CD4-positive, alpha-beta memory T cell (primary cell): ENCODE measurements at regions of chr3 and their contacts with region 1.

Region 1: GRCh38 chr3:48507351-48508061 is 3.5 kb upstream of the SHISA5 start:
- DNase-seq: peak; percentile 75 to 84 (median 77)
- H3K4me3 ChIP-seq: no peak overlapping the region
- H3K4me3 Mint-ChIP-seq: peak overlapping the region in 7 of 8 donors; percentile 42 to 77 (median 64)
- H3K27ac ChIP-seq: peak overlapping the region; percentile 27
- H3K27ac Mint-ChIP-seq: peak overlapping the region; percentile 83 to 92 (median 86)
- H3K4me1 ChIP-seq: peaks cover 62% of the 10 kb centered on the region
- H3K4me1 Mint-ChIP-seq: peaks cover 36 to 62% (median 50%) of the 10 kb centered on the region in 4 donors
- H3K27me3 ChIP-seq: no peaks in the 10 kb centered on the region
- H3K27me3 Mint-ChIP-seq: no peaks in the 10 kb centered on the region

Region 2: GRCh38 chr3:47791193-47791855 is 716.2 kb before region 1 on chr3:
- CTCF ChIA-PET with region 1: no interaction called
- POLR2A ChIA-PET with region 1: no interaction called
- intact Hi-C with region 1: no loop called
- DNase-seq: no peak
- H3K4me3 ChIP-seq: no peak overlapping the region
- H3K4me3 Mint-ChIP-seq: peak overlapping the region in 1 of 8 donors; percentile 46
- H3K27ac ChIP-seq: no peak overlapping the region
- H3K27ac Mint-ChIP-seq: no peak overlapping the region
- H3K4me1 ChIP-seq: no peaks in the 10 kb centered on the region
- H3K4me1 Mint-ChIP-seq: peaks cover 0 to 1% (median 0%) of the 10 kb centered on the region in 4 donors
- H3K27me3 ChIP-seq: no peaks in the 10 kb centered on the region
- H3K27me3 Mint-ChIP-seq: no peaks in the 10 kb centered on the region

Region 3: DNA sequence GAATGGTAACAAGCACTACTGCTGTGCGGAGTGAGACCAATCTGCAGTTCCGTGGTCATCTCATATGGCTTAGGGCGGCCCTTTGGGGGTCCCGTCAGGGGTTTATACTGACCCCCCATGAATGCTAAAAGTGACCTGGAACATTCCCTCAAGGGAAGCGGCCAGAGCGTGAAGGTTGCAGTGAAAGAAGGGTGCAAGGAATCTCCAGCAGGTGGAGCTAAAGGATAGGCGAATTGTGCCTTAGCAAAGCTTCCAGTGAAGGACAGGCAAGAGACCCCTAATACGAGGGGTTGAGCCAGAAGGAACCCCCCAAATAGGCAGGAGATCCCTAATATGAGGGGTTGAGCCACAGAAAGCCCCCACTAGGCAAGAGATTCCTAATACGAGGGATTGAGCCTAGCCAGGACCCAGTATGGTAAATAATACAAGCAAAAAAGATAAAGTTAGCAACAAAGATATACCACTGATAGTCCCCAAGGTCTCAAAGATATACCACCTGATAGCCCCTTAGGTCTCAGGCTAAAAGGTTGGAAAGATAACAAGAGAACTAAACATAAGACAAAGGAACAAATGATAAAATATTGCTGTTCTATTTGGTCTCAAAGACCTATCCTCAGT is 233.8 kb before region 1 on chr3:
- CTCF ChIA-PET with region 1: interaction called, 5 read pairs
- POLR2A ChIA-PET with region 1: no interaction called
- intact Hi-C with region 1: loop called (anchors 1 kb)
- DNase-seq: peak; percentile 51 to 66 (median 60)
- H3K4me3 ChIP-seq: no peak overlapping the region
- H3K4me3 Mint-ChIP-seq: no peak overlapping the region
- H3K27ac ChIP-seq: no peak overlapping the region
- H3K27ac Mint-ChIP-seq: peak overlapping the region in 2 of 7 donors; percentile 12 to 74
- H3K4me1 ChIP-seq: peaks cover 15% of the 10 kb centered on the region
- H3K4me1 Mint-ChIP-seq: peaks cover 14 to 27% (median 21%) of the 10 kb centered on the region in 4 donors
- H3K27me3 ChIP-seq: no peaks in the 10 kb centered on the region
- H3K27me3 Mint-ChIP-seq: no peaks in the 10 kb centered on the region

Region 4: GRCh38 chr3:48459773-48460516 is 47.6 kb before region 1 on chr3:
- CTCF ChIA-PET with region 1: interaction called, 31 read pairs
- POLR2A ChIA-PET with region 1: interaction called, 5 read pairs
- intact Hi-C with region 1: no loop called
- DNase-seq: no peak
- H3K4me3 ChIP-seq: no peak overlapping the region
- H3K4me3 Mint-ChIP-seq: no peak overlapping the region
- H3K27ac ChIP-seq: no peak overlapping the region
- H3K27ac Mint-ChIP-seq: peak overlapping the region in 1 of 7 donors; percentile 60
- H3K4me1 ChIP-seq: no peaks in the 10 kb centered on the region
- H3K4me1 Mint-ChIP-seq: peaks cover 0 to 10% (median 6%) of the 10 kb centered on the region in 4 donors
- H3K27me3 ChIP-seq: no peaks in the 10 kb centered on the region
- H3K27me3 Mint-ChIP-seq: no peaks in the 10 kb centered on the region

Region 5: GRCh38 chr3:48472915-48473616 is 34.4 kb before region 1 on chr3:
- CTCF ChIA-PET with region 1: interaction called, 32 read pairs
- POLR2A ChIA-PET with region 1: interaction called, 47 read pairs
- intact Hi-C with region 1: no loop called
- DNase-seq: peak; percentile 93 to 98 (median 96)
- H3K4me3 ChIP-seq: peak overlapping the region; percentile 93 to 95
- H3K4me3 Mint-ChIP-seq: peak overlapping the region; percentile 84 to 99 (median 95)
- H3K27ac ChIP-seq: peak overlapping the region; percentile 97
- H3K27ac Mint-ChIP-seq: peak overlapping the region; percentile 92 to 100 (median 99)
- H3K4me1 ChIP-seq: peaks cover 86% of the 10 kb centered on the region
- H3K4me1 Mint-ChIP-seq: peaks cover 34 to 75% (median 54%) of the 10 kb centered on the region in 4 donors
- H3K27me3 ChIP-seq: no peaks in the 10 kb centered on the region
- H3K27me3 Mint-ChIP-seq: no peaks in the 10 kb centered on the region

Region 6: GRCh38 chr3:48548729-48549705 is 41.5 kb after region 1 on chr3:
- CTCF ChIA-PET with region 1: interaction called, 53 read pairs
- POLR2A ChIA-PET with region 1: interaction called, 6 read pairs
- intact Hi-C with region 1: loop called (anchors 1 kb)
- DNase-seq: peak; percentile 77 to 82 (median 78)
- H3K4me3 ChIP-seq: no peak overlapping the region
- H3K4me3 Mint-ChIP-seq: no peak overlapping the region
- H3K27ac ChIP-seq: no peak overlapping the region
- H3K27ac Mint-ChIP-seq: peak overlapping the region in 2 of 7 donors; percentile 17 to 35
- H3K4me1 ChIP-seq: peaks cover 8% of the 10 kb centered on the region
- H3K4me1 Mint-ChIP-seq: peaks cover 5 to 21% (median 6%) of the 10 kb centered on the region in 4 donors
- H3K27me3 ChIP-seq: no peaks in the 10 kb centered on the region
- H3K27me3 Mint-ChIP-seq: no peaks in the 10 kb centered on the region